ENCODE measurements at regions of chr4 and their contacts with region 1.

Region 1: GRCh38 chr4:8391972-8392371 is 48.6 kb downstream of the ACOX3 start:
- DNase-seq: peak; percentile 96
- H3K4me3 ChIP-seq: no peak overlapping the region
- H3K27ac ChIP-seq: peak overlapping the region; percentile 55
- H3K4me1 ChIP-seq: peaks cover 30% of the 10 kb centered on the region
- H3K27me3 ChIP-seq: no peaks in the 10 kb centered on the region
- CTCF ChIP-seq: no peak
- POLR2A ChIP-seq: no peak

Region 2: DNA sequence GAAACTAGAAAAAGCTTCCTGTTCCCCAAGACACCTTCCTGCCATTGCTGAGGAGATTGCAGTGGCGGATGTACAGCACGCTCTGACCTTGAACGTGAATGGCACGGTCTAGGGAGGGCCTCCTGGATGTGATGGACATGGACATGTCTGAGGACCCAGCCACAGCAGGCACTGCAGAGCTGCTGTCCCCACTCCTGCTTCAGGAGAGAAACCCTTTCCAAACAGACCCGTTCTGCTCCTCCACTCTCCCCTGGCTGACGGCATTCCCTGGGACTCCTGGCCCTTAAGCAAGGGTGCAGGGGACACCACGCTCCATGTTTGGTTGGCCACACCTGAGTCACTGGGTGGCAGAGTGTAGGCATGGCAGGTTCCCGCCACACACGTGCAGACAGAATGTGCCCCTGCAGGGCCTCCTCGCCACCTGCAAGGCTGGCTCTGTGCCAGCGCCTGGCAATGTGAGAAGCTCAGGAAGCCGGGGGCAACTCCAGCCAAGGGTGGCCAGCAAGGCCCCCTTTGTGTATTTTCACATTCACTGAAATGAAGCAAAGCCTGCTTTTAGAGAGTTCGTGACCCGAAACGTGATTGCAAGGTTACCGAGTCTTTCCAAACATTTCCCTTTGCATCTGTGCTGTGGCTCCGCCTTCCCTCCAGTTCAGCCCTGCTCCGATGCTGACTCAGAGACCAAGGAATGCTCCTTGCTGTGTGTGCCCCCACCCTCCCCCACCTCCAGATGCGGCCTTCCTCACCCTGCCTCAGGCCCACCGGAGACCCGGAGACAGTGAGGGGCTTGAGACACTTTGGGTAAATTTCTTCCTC is 76.3 kb before region 1 on chr4:
- CTCF ChIA-PET with region 1: interaction called, 5 read pairs
- POLR2A ChIA-PET with region 1: no interaction called
- dilution Hi-C with region 1: no loop called
- intact Hi-C with region 1: loop called (anchors 1 kb)
- DNase-seq: peak; percentile 81
- H3K4me3 ChIP-seq: no peak overlapping the region
- H3K27ac ChIP-seq: no peak overlapping the region
- H3K4me1 ChIP-seq: peaks cover 7% of the 10 kb centered on the region
- H3K27me3 ChIP-seq: peaks cover 1 to 12% of the 10 kb centered on the region in 2 experiments
- CTCF ChIP-seq: no peak
- POLR2A ChIP-seq: no peak

Region 3: DNA sequence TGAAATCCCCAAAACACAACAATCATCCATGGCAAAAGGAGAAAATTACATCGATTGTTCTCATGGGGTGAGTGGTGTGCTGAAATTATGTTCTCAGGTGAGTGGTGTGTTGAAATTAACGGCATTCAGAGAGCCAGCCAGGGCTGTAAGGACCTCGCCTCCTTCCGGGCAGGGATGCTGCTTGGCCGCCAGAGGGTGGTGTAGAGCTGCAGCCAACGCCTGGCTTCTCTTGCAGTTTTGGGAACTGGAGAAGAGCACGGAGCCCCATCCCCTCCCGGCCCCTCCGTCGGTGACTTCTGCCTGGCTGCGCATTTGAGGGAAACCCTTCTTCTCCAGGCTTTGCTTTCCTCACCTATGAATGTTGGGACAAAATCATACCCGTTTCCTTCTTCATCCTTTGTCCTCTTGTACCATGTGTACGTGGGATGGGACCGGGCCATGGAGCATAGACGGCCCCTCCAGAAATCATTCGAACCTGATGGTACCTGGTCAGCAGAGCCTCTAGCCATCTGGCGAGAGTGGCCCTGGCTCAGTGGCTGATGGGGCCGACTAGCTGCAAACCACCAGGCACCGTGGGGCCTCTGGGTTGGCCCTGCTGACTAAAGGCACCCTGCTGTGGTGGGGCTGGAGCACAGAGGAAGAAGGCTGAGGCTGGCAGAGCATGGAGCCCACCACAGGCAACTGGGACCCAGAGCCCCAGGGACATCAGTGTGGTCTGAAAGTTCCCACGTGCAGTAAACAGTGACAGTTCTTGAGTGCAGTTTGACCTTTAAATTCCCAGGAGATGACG is 77.0 kb after region 1 on chr4:
- CTCF ChIA-PET with region 1: no interaction called
- POLR2A ChIA-PET with region 1: no interaction called
- dilution Hi-C with region 1: no loop called
- intact Hi-C with region 1: no loop called
- DNase-seq: peak; percentile 45
- H3K4me3 ChIP-seq: no peak overlapping the region
- H3K27ac ChIP-seq: no peak overlapping the region
- H3K4me1 ChIP-seq: no peaks in the 10 kb centered on the region
- H3K27me3 ChIP-seq: no peaks in the 10 kb centered on the region
- CTCF ChIP-seq: peak; percentile 88 to 97
- POLR2A ChIP-seq: no peak

Measured in endothelial cell of umbilical vein (primary cell).